ENCODE measurements at regions of chr3 and their contacts with region 1.

Region 1: DNA sequence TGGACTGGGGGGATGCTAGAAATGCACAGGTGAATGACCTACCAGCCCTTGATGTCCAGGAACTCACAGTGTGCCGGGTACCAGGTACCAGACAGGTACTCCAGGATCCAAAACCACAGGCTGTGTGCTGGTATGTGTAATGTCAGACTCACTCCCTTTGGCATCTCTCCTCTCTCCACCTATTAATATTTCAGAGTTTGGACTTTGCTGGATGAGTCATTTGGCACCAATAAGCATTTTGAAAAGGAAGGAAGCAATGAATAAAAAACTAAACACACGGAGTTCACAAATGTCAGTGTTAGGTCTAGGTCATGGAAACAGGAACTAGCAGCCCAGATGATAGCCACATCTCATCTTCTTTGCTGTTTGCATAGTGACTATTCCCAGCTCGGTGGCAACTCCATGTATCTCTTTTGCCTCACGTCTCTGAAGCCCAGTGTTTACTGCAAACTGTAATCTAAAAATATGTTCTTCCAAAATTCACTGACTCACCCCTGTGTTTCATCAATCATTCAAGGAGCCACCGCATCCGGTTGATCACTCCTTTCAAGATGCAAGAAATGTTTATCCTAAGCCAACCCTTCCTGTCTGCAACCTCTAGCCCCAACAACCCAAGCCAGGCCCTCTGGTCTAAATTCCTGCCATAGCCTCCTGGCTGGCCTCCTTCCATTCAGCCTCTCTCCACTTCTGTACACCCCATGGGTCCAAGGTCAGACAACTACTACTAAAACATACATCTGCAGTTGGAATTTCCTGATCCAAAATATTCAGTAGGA is 8.4 kb downstream of the ITGB5 start:
- DNase-seq: peak; percentile 74 to 75
- ATAC-seq: peak; percentile 72
- H3K4me3 ChIP-seq: no peak overlapping the region
- H3K27ac ChIP-seq: peak overlapping the region; percentile 72 to 90
- H3K4me1 ChIP-seq: peaks cover 13 to 17% of the 10 kb centered on the region in 2 donors
- H3K27me3 ChIP-seq: no peaks in the 10 kb centered on the region

Region 2: GRCh38 chr3:124834723-124835718 is 43.7 kb before region 1 on chr3:
- intact Hi-C with region 1: loop called in 1 of 2 experiments (anchors 5 kb)
- DNase-seq: peak in 1 of 2 donors; percentile 63
- ATAC-seq: peak; percentile 23
- H3K4me3 ChIP-seq: no peak overlapping the region
- H3K27ac ChIP-seq: peak overlapping the region; percentile 11 to 34
- H3K4me1 ChIP-seq: peaks cover 12 to 26% of the 10 kb centered on the region in 2 donors
- H3K27me3 ChIP-seq: no peaks in the 10 kb centered on the region

Region 3: DNA sequence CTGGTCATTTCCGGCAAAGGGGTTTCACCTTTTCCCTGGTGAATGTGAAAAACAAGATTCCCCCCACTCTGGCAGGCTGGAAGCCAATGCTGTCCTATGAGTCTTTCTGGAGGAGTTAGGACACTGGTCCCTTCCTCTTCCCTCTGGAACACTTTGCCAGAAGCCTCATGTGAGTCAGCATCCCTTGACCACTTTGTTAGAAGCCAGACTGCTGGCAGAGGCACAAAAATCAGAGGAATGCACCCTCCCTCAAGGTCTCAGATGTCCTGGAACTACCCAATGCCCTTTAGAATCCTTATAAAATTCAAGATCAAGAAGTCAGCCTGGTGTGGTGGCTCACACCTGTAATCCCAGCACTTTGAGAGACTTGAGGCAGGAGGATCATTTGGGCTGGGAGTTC is 18.1 kb before region 1 on chr3:
- intact Hi-C with region 1: no loop called
- DNase-seq: peak; percentile 87 to 88
- ATAC-seq: peak; percentile 74
- H3K4me3 ChIP-seq: no peak overlapping the region
- H3K27ac ChIP-seq: peak overlapping the region in 1 of 2 donors; percentile 94
- H3K4me1 ChIP-seq: peaks cover 3% of the 10 kb centered on the region in 2 donors
- H3K27me3 ChIP-seq: no peaks in the 10 kb centered on the region